CD4-positive, alpha-beta memory T cell (primary cell): ENCODE measurements at regions of chr11 and their contacts with region 1.

Region 1: GRCh38 chr11:66868726-66869566 is 12.1 kb downstream of the LRFN4 start:
- DNase-seq: peak; percentile 62 to 84 (median 68)
- H3K4me3 ChIP-seq: no peak overlapping the region
- H3K4me3 Mint-ChIP-seq: peak overlapping the region in 1 of 8 donors; percentile 57
- H3K27ac ChIP-seq: no peak overlapping the region
- H3K27ac Mint-ChIP-seq: peak overlapping the region in 3 of 7 donors; percentile 12 to 31 (median 12)
- H3K4me1 ChIP-seq: peaks cover 8% of the 10 kb centered on the region
- H3K4me1 Mint-ChIP-seq: peaks cover 2 to 13% (median 7%) of the 10 kb centered on the region in 4 donors
- H3K27me3 ChIP-seq: no peaks in the 10 kb centered on the region
- H3K27me3 Mint-ChIP-seq: no peaks in the 10 kb centered on the region

Region 2: DNA sequence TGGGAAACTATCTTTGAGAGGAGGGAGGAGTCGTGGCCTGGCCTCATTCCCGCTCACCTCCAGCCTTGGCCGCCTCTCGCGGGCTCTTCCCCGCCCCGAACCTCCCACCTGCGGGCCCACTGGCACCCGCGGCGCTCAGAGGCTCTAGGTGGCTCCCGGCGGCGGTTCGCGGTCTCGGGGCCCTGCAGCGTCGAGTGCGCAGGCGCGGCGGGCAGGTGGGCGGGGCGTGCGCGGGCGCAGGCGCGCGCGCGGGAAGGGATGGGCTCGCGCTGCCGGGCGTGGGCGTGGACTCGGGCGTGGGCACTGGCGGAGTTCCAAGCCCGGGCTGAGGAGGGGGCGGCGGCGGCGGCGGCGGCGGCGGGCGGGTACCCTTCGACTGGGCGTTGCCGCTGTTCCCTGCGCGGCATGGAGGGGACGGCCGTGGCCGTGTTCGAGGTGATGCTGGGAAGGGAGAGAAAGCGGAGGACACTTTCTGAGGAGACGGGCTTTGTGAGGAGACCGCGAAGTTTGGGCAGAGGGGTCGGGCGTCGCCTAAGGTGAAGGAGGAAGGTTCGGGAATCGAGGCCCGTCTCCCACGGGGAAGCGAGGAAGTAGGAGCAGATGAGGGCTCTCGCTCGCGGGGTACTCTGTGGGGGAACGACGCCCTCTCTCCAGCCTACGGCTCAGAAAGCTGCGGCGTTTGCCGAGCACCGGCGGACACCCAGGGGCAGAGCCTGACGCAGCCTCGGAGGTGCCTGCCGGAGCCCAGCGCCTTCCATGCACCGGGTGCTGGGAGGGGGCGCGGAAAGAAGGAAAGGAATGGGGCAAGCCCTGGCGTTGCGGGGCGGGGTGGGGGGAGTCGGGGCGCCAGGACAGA is 124.2 kb before region 1 on chr11:
- CTCF ChIA-PET with region 1: no interaction called
- POLR2A ChIA-PET with region 1: no interaction called
- intact Hi-C with region 1: loop called (anchors 1 kb)
- DNase-seq: peak; percentile 87 to 94 (median 91)
- H3K4me3 ChIP-seq: peak overlapping the region; percentile 76 to 78
- H3K4me3 Mint-ChIP-seq: peak overlapping the region; percentile 87 to 97 (median 94)
- H3K27ac ChIP-seq: peak overlapping the region; percentile 66
- H3K27ac Mint-ChIP-seq: peak overlapping the region; percentile 74 to 96 (median 89)
- H3K4me1 ChIP-seq: peaks cover 10% of the 10 kb centered on the region
- H3K4me1 Mint-ChIP-seq: peaks cover 2 to 13% (median 7%) of the 10 kb centered on the region in 4 donors
- H3K27me3 ChIP-seq: no peaks in the 10 kb centered on the region
- H3K27me3 Mint-ChIP-seq: no peaks in the 10 kb centered on the region

Region 3: GRCh38 chr11:66835768-66836405 is 33.1 kb before region 1 on chr11:
- CTCF ChIA-PET with region 1: no interaction called
- POLR2A ChIA-PET with region 1: no interaction called
- intact Hi-C with region 1: loop called (anchors 1 kb)
- DNase-seq: no peak
- H3K4me3 ChIP-seq: no peak overlapping the region
- H3K4me3 Mint-ChIP-seq: no peak overlapping the region
- H3K27ac ChIP-seq: no peak overlapping the region
- H3K27ac Mint-ChIP-seq: peak overlapping the region in 4 of 7 donors; percentile 21 to 73 (median 38)
- H3K4me1 ChIP-seq: peaks cover 21% of the 10 kb centered on the region
- H3K4me1 Mint-ChIP-seq: peaks cover 18 to 32% (median 27%) of the 10 kb centered on the region in 4 donors
- H3K27me3 ChIP-seq: no peaks in the 10 kb centered on the region
- H3K27me3 Mint-ChIP-seq: no peaks in the 10 kb centered on the region

Region 4: GRCh38 chr11:66936311-66936711 is 67.4 kb after region 1 on chr11:
- CTCF ChIA-PET with region 1: no interaction called
- POLR2A ChIA-PET with region 1: no interaction called
- intact Hi-C with region 1: no loop called
- DNase-seq: no peak
- H3K4me3 ChIP-seq: no peak overlapping the region
- H3K4me3 Mint-ChIP-seq: no peak overlapping the region
- H3K27ac ChIP-seq: no peak overlapping the region
- H3K27ac Mint-ChIP-seq: no peak overlapping the region
- H3K4me1 ChIP-seq: no peaks in the 10 kb centered on the region
- H3K4me1 Mint-ChIP-seq: no peaks in the 10 kb centered on the region
- H3K27me3 ChIP-seq: no peaks in the 10 kb centered on the region
- H3K27me3 Mint-ChIP-seq: peaks cover 0 to 2% of the 10 kb centered on the region in 2 donors